HepG2 (cell line): ENCODE measurements at regions of chr12 and their contacts with region 1.

Region 1: GRCh38 chr12:49776413-49776812 is 35.1 kb downstream of the TMBIM6 start:
- DNase-seq: peak; percentile 66
- ATAC-seq: peak; percentile 91
- H3K4me3 ChIP-seq: no peak overlapping the region
- H3K27ac ChIP-seq: no peak overlapping the region
- H3K4me1 ChIP-seq: peaks cover 16% of the 10 kb centered on the region
- H3K27me3 ChIP-seq: peaks cover 0 to 4% of the 10 kb centered on the region in 2 experiments; a peak in 1 of 5 replicates
- CTCF ChIP-seq: peak; percentile 94
- EP300 ChIP-seq: no peak
- POLR2A ChIP-seq: no peak
- RAD21 ChIP-seq: peak; percentile 86

Region 2: GRCh38 chr12:49644620-49644994 is 131.8 kb before region 1 on chr12:
- CTCF ChIA-PET with region 1: interaction called, 4 read pairs
- POLR2A ChIA-PET with region 1: no interaction called
- in situ Hi-C with region 1: no loop called
- intact Hi-C with region 1: loop called (anchors 2 kb)
- DNase-seq: peak; percentile 49
- ATAC-seq: peak; percentile 65
- H3K4me3 ChIP-seq: no peak overlapping the region
- H3K27ac ChIP-seq: no peak overlapping the region
- H3K4me1 ChIP-seq: peaks cover 52% of the 10 kb centered on the region
- H3K27me3 ChIP-seq: no peaks in the 10 kb centered on the region; a peak in 1 of 5 replicates
- CTCF ChIP-seq: peak; percentile 88
- EP300 ChIP-seq: no peak
- POLR2A ChIP-seq: no peak
- RAD21 ChIP-seq: peak; percentile 89

Region 3: GRCh38 chr12:49720214-49720613 is 56.2 kb before region 1 on chr12:
- CTCF ChIA-PET with region 1: no interaction called
- POLR2A ChIA-PET with region 1: no interaction called
- in situ Hi-C with region 1: no loop called
- intact Hi-C with region 1: loop called (anchors 10 kb)
- DNase-seq: peak; percentile 52
- ATAC-seq: peak; percentile 68
- H3K4me3 ChIP-seq: no peak overlapping the region
- H3K27ac ChIP-seq: no peak overlapping the region
- H3K4me1 ChIP-seq: peaks cover 10% of the 10 kb centered on the region; the same call in 1 of the 2 replicates
- H3K27me3 ChIP-seq: no peaks in the 10 kb centered on the region; a peak in 1 of 5 replicates
- CTCF ChIP-seq: peak; percentile 17; the same call in 1 of the 2 replicates
- EP300 ChIP-seq: no peak
- POLR2A ChIP-seq: no peak
- RAD21 ChIP-seq: no peak

Region 4: DNA sequence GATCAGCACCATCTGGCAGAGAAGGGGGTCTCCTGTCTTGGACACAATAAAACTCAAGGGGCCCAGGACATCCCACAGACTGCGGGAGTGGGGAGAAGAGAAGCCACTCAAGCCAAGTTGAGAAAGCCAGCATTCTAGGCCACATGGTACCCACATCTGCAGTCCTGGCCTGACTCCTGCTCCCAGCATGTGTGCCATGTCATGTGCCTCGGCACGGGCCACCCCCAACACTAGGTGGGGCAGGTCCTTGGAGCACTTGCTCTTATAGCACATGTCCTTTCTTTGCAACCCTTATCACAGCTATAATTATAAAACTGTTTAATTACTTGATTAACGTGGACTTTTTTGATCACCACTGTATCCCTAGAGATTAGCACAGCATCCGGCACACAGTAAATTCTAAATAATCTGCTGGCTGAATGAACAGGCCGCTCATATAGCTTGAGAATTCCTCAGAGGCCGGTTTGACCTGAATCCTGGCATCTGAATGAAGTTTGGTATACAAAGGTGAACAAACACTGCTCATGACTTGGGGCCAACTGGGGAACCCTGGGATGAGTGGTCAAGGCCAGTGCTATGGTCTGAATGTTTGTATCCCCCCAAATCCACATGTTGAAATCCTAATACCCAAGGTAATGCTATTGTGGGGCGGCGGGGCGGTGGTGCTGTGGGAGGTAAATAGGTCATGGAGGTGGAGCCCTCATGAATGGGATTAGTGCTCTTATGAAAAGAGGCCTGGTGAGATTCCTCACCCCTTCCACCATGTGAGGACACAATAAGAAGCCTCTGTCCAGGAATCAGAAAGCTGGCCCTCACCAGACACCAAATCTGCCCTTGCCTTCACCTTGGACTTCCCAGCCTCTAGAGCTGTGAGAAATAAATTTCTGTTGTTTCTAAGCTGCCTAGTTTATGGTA is 45.2 kb after region 1 on chr12:
- CTCF ChIA-PET with region 1: no interaction called
- POLR2A ChIA-PET with region 1: no interaction called
- in situ Hi-C with region 1: no loop called
- intact Hi-C with region 1: no loop called
- DNase-seq: no peak
- ATAC-seq: no peak
- H3K4me3 ChIP-seq: no peak overlapping the region
- H3K27ac ChIP-seq: no peak overlapping the region
- H3K4me1 ChIP-seq: peaks cover 48% of the 10 kb centered on the region
- H3K27me3 ChIP-seq: no peaks in the 10 kb centered on the region
- CTCF ChIP-seq: no peak
- EP300 ChIP-seq: no peak
- POLR2A ChIP-seq: no peak
- RAD21 ChIP-seq: no peak

Region 5: DNA sequence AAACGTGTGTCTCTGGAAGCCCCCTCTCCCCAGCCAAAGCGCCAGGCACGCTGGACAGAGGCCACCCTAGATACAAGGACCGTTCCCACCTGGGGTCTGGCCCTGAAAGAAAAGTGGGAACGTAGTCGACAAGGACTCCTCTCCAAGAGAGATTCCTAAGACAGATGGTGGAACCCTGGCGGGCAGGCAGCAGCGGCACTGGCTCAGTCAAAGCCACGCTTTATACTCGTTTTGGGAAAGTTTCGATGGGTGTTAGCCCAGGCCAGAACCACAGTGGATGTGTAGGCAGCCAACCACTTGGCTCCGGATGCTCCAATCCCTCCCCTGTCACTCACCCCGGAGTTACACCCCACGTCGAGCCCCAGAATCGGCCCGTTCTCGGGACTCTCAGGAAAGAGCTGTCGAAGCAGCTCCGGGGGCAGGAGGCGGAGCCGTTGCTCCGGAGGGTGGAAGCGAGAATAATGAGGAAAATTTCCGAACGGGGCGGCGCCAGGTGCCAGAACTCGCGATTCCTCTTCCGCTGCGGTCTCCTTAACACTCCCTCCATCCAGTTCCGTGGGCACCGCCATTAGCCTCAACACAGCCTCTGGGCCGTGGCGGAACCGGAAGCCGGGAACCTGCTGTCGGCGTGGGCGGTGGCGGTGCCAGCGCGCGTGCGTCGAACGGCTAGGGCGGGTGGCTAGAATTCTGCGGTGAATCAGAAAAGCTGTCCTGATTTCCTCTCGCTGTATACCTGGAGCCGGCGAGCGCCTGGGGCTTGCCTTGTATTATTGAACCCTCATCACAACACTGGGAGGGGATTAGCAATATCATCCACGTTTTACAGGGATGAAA is 66.3 kb after region 1 on chr12 and contains the start of gene BCDIN3D:
- CTCF ChIA-PET with region 1: interaction called, 39 read pairs
- POLR2A ChIA-PET with region 1: no interaction called
- in situ Hi-C with region 1: loop called (anchors 10 kb)
- intact Hi-C with region 1: loop called (anchors 1 kb)
- DNase-seq: peak; percentile 83
- ATAC-seq: peak; percentile 97
- H3K4me3 ChIP-seq: peak within 1 kb of the TSS; percentile 94 to 99 (median 97)
- H3K27ac ChIP-seq: peak within 1 kb of the TSS; percentile 92
- H3K4me1 ChIP-seq: peaks cover 19% of the 10 kb centered on the region
- H3K27me3 ChIP-seq: peaks cover 0 to 3% of the 10 kb centered on the region in 2 experiments; a peak in 1 of 5 replicates
- CTCF ChIP-seq: no peak
- EP300 ChIP-seq: no peak
- POLR2A ChIP-seq: peak; percentile 75 to 83
- RAD21 ChIP-seq: no peak
- total RNA-seq, gene BCDIN3D: 1.8 and 2.5 TPM in 2 replicates